Caco-2 (cell line): ENCODE measurements at regions of chr20 and their contacts with region 1.

Region 1: GRCh38 chr20:59071216-59071615 is 28.6 kb upstream of the PRELID3B start:
- DNase-seq: no peak
- H3K4me3 ChIP-seq: no peak overlapping the region
- H3K4me3 Mint-ChIP-seq: no peak overlapping the region
- H3K27ac Mint-ChIP-seq: no peak overlapping the region
- H3K4me1 ChIP-seq: no peaks in the 10 kb centered on the region
- H3K4me1 Mint-ChIP-seq: no peaks in the 10 kb centered on the region
- H3K27me3 ChIP-seq: peaks cover 4% of the 10 kb centered on the region; the same call in 1 of the 2 replicates
- H3K27me3 Mint-ChIP-seq: peaks cover 36% of the 10 kb centered on the region
- CTCF ChIP-seq: no peak

Region 2: DNA sequence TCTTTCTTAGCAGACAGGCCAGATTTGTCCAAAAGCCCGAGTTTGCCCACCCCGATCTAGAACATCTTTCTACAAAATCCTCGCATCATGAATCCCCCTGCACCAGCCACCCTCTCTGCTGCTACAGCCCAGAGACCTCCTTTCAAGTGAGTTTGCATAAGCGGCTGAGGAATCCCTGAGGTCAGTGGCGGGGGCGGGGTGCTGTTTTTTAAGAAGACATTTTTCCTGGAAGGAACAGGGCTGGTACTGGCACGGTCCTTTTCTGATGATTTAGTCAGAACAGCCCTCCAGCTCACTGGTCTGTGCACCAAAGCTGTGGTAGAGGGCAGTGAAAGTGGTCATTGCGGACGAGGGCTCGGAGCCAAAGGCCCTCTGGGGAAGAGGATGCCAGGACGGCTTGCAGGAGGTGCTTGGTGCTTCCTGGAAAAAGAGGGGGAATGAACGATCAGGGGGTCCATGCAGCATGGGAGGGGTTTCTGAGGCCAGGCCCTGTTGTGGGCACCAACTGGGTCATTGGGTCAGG is 271.0 kb before region 1 on chr20:
- CTCF ChIA-PET with region 1: no interaction called
- POLR2A ChIA-PET with region 1: no interaction called
- intact Hi-C with region 1: no loop called
- DNase-seq: no peak
- H3K4me3 ChIP-seq: no peak overlapping the region
- H3K4me3 Mint-ChIP-seq: no peak overlapping the region
- H3K27ac Mint-ChIP-seq: no peak overlapping the region
- H3K4me1 ChIP-seq: no peaks in the 10 kb centered on the region
- H3K4me1 Mint-ChIP-seq: peaks cover 8% of the 10 kb centered on the region
- H3K27me3 ChIP-seq: no peaks in the 10 kb centered on the region; the same call in none of the 2 replicates
- H3K27me3 Mint-ChIP-seq: peaks cover 45% of the 10 kb centered on the region
- CTCF ChIP-seq: no peak

Region 3: GRCh38 chr20:59055295-59055694 is 15.9 kb before region 1 on chr20:
- CTCF ChIA-PET with region 1: no interaction called
- POLR2A ChIA-PET with region 1: interaction called, 11 read pairs
- intact Hi-C with region 1: no loop called
- DNase-seq: no peak
- H3K4me3 ChIP-seq: no peak overlapping the region
- H3K4me3 Mint-ChIP-seq: no peak overlapping the region
- H3K27ac Mint-ChIP-seq: no peak overlapping the region
- H3K4me1 ChIP-seq: no peaks in the 10 kb centered on the region
- H3K4me1 Mint-ChIP-seq: no peaks in the 10 kb centered on the region
- H3K27me3 ChIP-seq: peaks cover under 1% of the 10 kb centered on the region; the same call in 1 of the 2 replicates
- H3K27me3 Mint-ChIP-seq: peaks cover 11% of the 10 kb centered on the region
- CTCF ChIP-seq: peak; percentile 35 to 44